ENCODE measurements at regions of chr5 and their contacts with region 1.

Region 1: DNA sequence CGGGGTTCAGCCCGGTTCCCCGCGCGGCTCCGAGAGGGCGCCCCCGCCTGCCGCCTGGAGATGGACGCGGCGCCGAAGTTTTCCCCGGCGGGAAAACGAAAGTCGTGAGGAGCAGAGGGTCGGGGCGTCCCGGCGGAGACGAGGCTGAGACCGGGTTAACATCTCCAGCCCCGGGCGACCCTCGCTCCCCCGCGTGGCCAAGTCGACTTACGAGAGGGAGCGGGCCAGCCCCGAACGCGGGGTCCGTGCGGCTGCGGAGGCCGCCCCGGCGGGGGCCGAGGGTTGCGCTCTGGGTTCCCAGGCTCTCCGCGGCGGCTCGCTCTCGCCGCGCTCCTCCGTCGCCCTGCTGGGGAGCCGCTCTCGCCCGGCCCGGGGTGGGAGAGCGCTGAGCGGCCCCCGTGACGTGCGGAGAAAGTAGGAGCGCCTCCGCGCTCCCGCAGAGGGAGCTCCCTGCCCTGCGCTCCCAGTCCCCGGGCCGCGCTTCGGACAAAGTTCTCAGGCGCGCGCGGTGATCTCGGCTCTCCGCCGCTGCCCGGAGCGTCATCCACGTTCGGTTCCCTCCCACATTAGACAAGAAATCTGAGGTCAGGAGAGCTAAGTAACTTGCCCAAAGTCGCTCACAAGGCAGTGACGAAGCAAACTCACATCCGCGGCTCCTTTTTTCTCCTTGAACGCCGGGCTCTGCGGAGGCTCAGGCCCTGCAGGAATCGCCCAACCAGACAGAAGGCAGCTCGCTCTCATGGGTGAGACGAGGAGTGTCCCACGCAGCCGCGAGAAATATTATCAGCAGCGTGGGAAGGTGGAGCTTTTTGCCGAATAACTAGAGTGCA is 1.2 kb upstream of the GCNT4 start:
- DNase-seq: peak in 8 of 9 donors; percentile 49 to 81 (median 73)
- ATAC-seq: peak; percentile 57
- H3K4me3 ChIP-seq: peak overlapping the region; percentile 67
- H3K4me3 Mint-ChIP-seq: peak overlapping the region; percentile 89 to 95 (median 93)
- H3K27ac ChIP-seq: peak overlapping the region; percentile 87
- H3K27ac Mint-ChIP-seq: peak overlapping the region; percentile 84 to 99 (median 97)
- H3K4me1 ChIP-seq: peaks cover 64 to 75% of the 10 kb centered on the region in 2 donors
- H3K4me1 Mint-ChIP-seq: peaks cover 57 to 86% (median 79%) of the 10 kb centered on the region in 7 donors
- H3K27me3 ChIP-seq: no peaks in the 10 kb centered on the region
- H3K27me3 Mint-ChIP-seq: peaks cover 0 to 17% (median 0%) of the 10 kb centered on the region in 5 donors

Region 2: DNA sequence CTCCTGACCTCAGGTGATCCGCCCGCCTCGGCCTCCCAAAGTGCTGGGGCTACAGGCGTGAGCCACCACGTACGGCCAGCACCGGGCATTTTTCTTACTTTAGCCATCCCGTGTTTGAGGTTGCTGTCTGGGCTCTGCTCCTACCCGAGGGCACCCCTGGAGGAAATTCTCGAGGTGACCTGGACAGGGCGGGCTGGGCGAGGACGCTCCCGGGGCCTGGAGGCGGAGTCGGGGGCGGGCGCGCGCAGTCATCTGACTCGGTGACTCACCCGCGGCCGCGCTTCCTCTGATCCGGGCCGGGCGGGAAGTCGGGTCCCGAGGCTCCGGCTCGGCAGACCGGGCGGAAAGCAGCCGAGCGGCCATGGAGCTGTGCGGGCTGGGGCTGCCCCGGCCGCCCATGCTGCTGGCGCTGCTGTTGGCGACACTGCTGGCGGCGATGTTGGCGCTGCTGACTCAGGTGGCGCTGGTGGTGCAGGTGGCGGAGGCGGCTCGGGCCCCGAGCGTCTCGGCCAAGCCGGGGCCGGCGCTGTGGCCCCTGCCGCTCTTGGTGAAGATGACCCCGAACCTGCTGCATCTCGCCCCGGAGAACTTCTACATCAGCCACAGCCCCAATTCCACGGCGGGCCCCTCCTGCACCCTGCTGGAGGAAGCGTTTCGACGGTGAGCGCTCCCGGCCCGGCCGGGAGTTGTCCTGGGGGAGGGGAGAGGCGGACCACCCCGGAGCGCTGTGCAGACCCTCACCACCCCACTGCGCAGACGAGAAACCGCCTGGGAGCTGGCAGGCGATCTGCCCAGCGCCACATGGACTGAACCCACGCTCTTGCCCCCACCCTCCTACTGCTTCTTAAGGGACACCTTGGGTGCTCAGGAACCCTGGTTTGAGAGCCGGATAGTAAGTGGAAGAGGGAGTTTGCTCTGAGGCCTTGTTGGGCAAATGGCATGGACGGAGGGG is 368.3 kb before region 1 on chr5 and contains the start of gene HEXB:
- CTCF ChIA-PET with region 1: no interaction called
- POLR2A ChIA-PET with region 1: interaction called, 3 read pairs
- intact Hi-C with region 1: loop called (anchors 5 to 10 kb)
- DNase-seq: peak; percentile 55 to 89 (median 69)
- ATAC-seq: peak; percentile 91
- H3K4me3 ChIP-seq: peak within 1 kb of the TSS; percentile 86
- H3K4me3 Mint-ChIP-seq: peak within 1 kb of the TSS; percentile 76 to 92 (median 86)
- H3K27ac ChIP-seq: peak within 1 kb of the TSS; percentile 78
- H3K27ac Mint-ChIP-seq: peak within 1 kb of the TSS; percentile 76 to 92 (median 86)
- H3K4me1 ChIP-seq: peaks cover 7 to 13% of the 10 kb centered on the region in 2 donors
- H3K4me1 Mint-ChIP-seq: peaks cover 16 to 34% (median 30%) of the 10 kb centered on the region in 7 donors
- H3K27me3 ChIP-seq: no peaks in the 10 kb centered on the region
- H3K27me3 Mint-ChIP-seq: peaks cover 0 to 17% (median 0%) of the 10 kb centered on the region in 5 donors
- total RNA-seq, gene HEXB: 37.7 to 88.9 (median 64.2) TPM

Region 3: DNA sequence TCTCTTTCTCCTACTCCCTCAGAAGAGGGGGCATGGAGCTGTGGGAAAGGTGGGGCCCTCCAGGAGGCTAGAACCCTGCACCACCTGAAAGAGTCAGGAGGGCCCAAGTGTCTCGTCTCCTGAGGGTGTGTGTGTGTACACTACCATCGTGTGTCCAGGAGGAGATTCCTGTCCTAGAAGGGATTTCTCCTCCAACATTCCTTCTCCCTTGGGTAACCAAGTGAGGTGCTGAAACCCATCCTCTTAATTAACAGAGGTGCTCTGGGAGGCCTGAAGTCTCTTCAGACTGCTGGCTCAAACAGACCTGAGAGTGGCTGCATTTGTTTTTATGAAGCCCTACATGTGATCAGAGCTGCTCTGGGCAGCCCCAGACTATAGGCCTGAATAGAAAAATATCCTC is 126.2 kb before region 1 on chr5:
- CTCF ChIA-PET with region 1: interaction called, 12 read pairs
- POLR2A ChIA-PET with region 1: no interaction called
- intact Hi-C with region 1: loop called in 1 of 2 experiments (anchors 1 kb)
- DNase-seq: no peak
- ATAC-seq: no peak
- H3K4me3 ChIP-seq: no peak overlapping the region
- H3K4me3 Mint-ChIP-seq: no peak overlapping the region
- H3K27ac ChIP-seq: no peak overlapping the region
- H3K27ac Mint-ChIP-seq: no peak overlapping the region
- H3K4me1 ChIP-seq: no peaks in the 10 kb centered on the region
- H3K4me1 Mint-ChIP-seq: no peaks in the 10 kb centered on the region
- H3K27me3 ChIP-seq: no peaks in the 10 kb centered on the region
- H3K27me3 Mint-ChIP-seq: no peaks in the 10 kb centered on the region

Region 4: GRCh38 chr5:75067434-75067833 is 13.9 kb after region 1 on chr5:
- CTCF ChIA-PET with region 1: interaction called, 12 read pairs
- POLR2A ChIA-PET with region 1: interaction called, 16 read pairs
- intact Hi-C with region 1: loop called in 1 of 2 experiments (anchors 2 kb)
- DNase-seq: no peak
- ATAC-seq: no peak
- H3K4me3 ChIP-seq: no peak overlapping the region
- H3K4me3 Mint-ChIP-seq: peak overlapping the region in 2 of 10 donors; percentile 22 to 58
- H3K27ac ChIP-seq: no peak overlapping the region
- H3K27ac Mint-ChIP-seq: peak overlapping the region in 5 of 9 donors; percentile 4 to 69 (median 26)
- H3K4me1 ChIP-seq: peaks cover 0 to 11% of the 10 kb centered on the region in 2 donors
- H3K4me1 Mint-ChIP-seq: peaks cover 5 to 54% (median 37%) of the 10 kb centered on the region in 7 donors
- H3K27me3 ChIP-seq: no peaks in the 10 kb centered on the region
- H3K27me3 Mint-ChIP-seq: no peaks in the 10 kb centered on the region

Region 5: GRCh38 chr5:75130818-75131349 is 77.4 kb after region 1 on chr5:
- CTCF ChIA-PET with region 1: interaction called, 4 read pairs
- POLR2A ChIA-PET with region 1: no interaction called
- intact Hi-C with region 1: loop called in 1 of 2 experiments (anchors 5 kb)
- DNase-seq: no peak
- ATAC-seq: no peak
- H3K4me3 ChIP-seq: no peak overlapping the region
- H3K4me3 Mint-ChIP-seq: no peak overlapping the region
- H3K27ac ChIP-seq: no peak overlapping the region
- H3K27ac Mint-ChIP-seq: no peak overlapping the region
- H3K4me1 ChIP-seq: no peaks in the 10 kb centered on the region
- H3K4me1 Mint-ChIP-seq: no peaks in the 10 kb centered on the region
- H3K27me3 ChIP-seq: no peaks in the 10 kb centered on the region
- H3K27me3 Mint-ChIP-seq: no peaks in the 10 kb centered on the region

Region 6: DNA sequence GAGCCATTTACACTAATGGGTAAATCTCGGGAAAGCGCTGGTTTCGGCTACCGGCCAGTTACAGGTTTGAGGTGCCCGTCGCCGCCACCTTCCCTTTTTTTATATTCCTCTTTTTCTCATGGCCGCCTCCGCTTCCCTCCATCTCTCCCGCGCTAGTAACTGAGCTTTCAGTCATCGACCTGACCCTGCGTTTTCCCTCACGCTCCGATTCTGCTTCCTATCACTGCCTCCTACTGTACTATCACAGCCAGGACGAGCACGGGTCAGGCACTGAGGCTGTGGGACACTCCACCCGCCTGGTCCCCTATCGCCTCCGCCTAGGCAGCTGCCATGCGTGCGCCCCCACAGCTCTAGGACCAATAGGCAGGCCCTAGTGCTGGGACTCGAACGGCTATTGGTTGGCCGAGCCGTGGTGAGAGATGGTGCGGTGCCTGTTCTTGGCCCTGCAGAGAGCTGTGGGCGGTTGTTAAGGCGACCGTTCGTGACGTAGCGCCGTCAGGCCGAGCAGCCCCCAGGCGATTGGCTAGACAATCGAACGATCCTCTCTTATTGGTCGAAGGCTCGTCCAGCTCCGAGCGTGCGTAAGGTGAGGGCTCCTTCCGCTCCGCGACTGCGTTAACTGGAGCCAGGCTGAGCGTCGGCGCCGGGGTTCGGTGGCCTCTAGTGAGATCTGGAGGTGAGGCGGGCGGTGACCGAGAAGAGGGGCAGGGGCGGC is 283.3 kb after region 1 on chr5 and contains the start of gene HMGCR:
- CTCF ChIA-PET with region 1: interaction called, 3 read pairs
- POLR2A ChIA-PET with region 1: interaction called, 11 read pairs
- intact Hi-C with region 1: loop called (anchors 1 kb)
- DNase-seq: peak; percentile 82 to 97 (median 95)
- ATAC-seq: peak; percentile 96
- H3K4me3 ChIP-seq: peak within 1 kb of the TSS; percentile 85
- H3K4me3 Mint-ChIP-seq: no peak within 1 kb of the TSS
- H3K27ac ChIP-seq: peak within 1 kb of the TSS; percentile 83
- H3K27ac Mint-ChIP-seq: no peak within 1 kb of the TSS
- H3K4me1 ChIP-seq: peaks cover 8 to 10% of the 10 kb centered on the region in 2 donors
- H3K4me1 Mint-ChIP-seq: peaks cover 18 to 41% (median 37%) of the 10 kb centered on the region in 7 donors
- H3K27me3 ChIP-seq: no peaks in the 10 kb centered on the region
- H3K27me3 Mint-ChIP-seq: no peaks in the 10 kb centered on the region
- total RNA-seq, gene HMGCR: 38.8 to 57.3 (median 43.8) TPM

Region 7: DNA sequence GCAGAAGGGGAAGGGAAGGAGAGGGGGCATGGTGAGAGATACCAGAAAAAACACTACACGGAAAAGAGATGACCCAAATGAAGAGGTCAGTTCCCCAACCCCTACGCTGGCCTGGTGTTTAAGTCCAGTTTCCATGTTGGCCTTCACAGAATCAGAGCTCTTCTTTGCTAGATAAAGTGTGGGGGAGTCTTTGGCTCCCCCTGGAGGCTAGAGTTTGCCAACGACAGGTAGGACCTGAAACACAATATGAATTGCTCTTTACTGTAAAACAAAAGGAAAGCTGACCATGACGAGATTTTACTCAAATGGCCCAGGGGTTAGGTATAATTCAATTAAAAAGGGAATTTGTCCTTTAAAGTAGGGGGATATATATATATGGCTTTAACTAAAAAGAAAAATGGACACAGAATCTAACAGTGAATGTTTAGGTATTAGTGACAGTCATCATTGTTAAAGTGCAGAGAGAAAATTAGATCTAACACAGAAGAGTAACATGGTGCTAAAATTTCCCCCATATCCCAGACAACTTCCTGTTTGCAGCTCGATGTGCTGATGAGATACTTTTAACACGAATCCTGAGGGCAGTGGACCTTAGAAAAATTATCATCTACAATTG is 1121.6 kb after region 1 on chr5:
- CTCF ChIA-PET with region 1: no interaction called
- POLR2A ChIA-PET with region 1: no interaction called
- intact Hi-C with region 1: loop called in 1 of 2 experiments (anchors 10 kb)
- DNase-seq: peak in 7 of 9 donors; percentile 12 to 34 (median 26)
- ATAC-seq: peak; percentile 75
- H3K4me3 ChIP-seq: no peak overlapping the region
- H3K4me3 Mint-ChIP-seq: peak overlapping the region in 7 of 10 donors; percentile 30 to 70 (median 52)
- H3K27ac ChIP-seq: no peak overlapping the region
- H3K27ac Mint-ChIP-seq: no peak overlapping the region
- H3K4me1 ChIP-seq: peaks cover 4 to 16% of the 10 kb centered on the region in 2 donors
- H3K4me1 Mint-ChIP-seq: peaks cover 15 to 20% (median 17%) of the 10 kb centered on the region in 7 donors
- H3K27me3 ChIP-seq: no peaks in the 10 kb centered on the region
- H3K27me3 Mint-ChIP-seq: peaks cover 0 to 6% (median 0%) of the 10 kb centered on the region in 5 donors

Measured in naive thymus-derived CD4-positive, alpha-beta T cell (primary cell).